ENCODE measurements at regions of chr7 and their contacts with region 1.

Region 1: GRCh38 chr7:116122972-116123595 is 87.3 kb upstream of the TES start:
- DNase-seq: no peak
- ATAC-seq: no peak
- H3K4me3 Mint-ChIP-seq: no peak overlapping the region
- H3K27ac Mint-ChIP-seq: no peak overlapping the region
- H3K4me1 Mint-ChIP-seq: no peaks in the 10 kb centered on the region
- H3K27me3 Mint-ChIP-seq: peaks cover 2% of the 10 kb centered on the region

Region 2: DNA sequence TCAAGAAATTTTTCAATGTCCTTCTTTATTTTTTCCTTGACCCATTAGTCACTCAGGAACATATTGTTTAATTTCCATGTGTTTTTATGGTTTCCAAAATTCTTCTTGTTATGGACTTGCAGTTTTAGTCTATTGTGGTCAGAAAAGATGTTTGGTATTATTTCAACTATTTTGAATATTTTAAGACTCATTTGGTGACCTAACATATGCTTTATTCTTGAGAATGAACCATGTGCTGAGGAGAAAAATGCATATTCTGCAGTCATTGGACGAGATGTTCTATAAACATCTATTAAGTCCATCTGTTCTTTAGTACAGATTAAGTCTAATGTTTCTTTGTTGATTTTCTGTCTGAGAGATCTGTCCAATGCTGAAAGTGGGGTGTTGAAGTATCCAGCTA is 1243.5 kb before region 1 on chr7:
- CTCF ChIA-PET with region 1: no interaction called
- POLR2A ChIA-PET with region 1: no interaction called
- intact Hi-C with region 1: loop called in 1 of 2 experiments (anchors 10 kb)
- DNase-seq: no peak
- ATAC-seq: no peak
- H3K4me3 Mint-ChIP-seq: no peak overlapping the region
- H3K27ac Mint-ChIP-seq: no peak overlapping the region
- H3K4me1 Mint-ChIP-seq: no peaks in the 10 kb centered on the region
- H3K27me3 Mint-ChIP-seq: no peaks in the 10 kb centered on the region

Region 3: DNA sequence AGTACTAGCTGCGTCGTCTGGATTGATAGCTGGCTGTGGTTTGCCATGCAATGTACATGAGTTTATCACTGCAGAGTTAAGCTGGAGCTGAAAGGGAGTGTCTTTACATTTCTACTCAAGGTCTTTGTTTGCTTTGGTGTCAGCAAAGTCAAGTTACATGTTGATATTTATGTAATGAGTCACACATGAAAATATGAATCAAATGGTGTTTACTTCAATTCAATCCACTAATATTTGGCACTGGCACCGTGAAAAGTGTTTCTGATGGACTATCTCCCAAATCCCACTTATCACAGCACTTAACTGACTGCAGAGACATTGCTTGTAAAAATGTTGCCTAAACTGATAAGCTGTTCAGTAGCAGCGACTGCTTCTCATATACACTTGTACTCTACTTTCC is 488.5 kb before region 1 on chr7:
- CTCF ChIA-PET with region 1: no interaction called
- POLR2A ChIA-PET with region 1: no interaction called
- intact Hi-C with region 1: no loop called
- DNase-seq: no peak
- ATAC-seq: no peak
- H3K4me3 Mint-ChIP-seq: no peak overlapping the region
- H3K27ac Mint-ChIP-seq: no peak overlapping the region
- H3K4me1 Mint-ChIP-seq: no peaks in the 10 kb centered on the region
- H3K27me3 Mint-ChIP-seq: no peaks in the 10 kb centered on the region